ENCODE measurements at regions of chr9 and their contacts with region 1.

Region 1: DNA sequence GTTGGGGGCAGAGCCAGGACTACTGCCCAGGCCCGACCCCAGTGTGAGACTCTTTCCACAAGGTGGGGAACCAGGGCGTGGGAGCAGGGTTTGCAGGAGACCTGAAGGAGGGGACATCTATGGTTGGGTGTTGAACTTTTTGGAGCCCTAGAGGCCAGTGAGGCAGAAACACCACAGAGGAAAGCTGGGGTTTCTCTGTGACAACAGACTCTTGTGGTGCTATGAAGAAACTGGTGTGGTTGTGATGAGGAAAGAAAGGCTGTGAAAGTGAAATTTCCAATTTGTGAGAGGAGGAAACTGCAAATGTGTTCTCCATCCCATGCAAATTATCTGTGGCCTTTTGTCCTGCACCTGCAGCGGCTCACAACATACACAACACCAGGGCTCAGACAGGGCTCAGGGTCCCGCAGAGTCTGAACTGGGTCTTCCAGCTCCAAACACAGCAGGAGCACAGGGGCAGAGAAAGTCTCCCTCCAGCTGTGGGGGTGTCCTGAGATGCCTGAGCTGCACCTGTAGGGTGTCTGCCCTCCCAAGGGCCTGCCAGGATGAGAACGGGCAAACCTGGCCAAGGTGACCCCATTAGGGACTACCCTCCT is 51.4 kb upstream of the GRHPR start:
- DNase-seq: no peak
- H3K4me3 ChIP-seq: no peak overlapping the region
- H3K27ac ChIP-seq: no peak overlapping the region
- H3K4me1 ChIP-seq: no peaks in the 10 kb centered on the region
- H3K27me3 ChIP-seq: no peaks in the 10 kb centered on the region
- CTCF ChIP-seq: no peak

Region 2: DNA sequence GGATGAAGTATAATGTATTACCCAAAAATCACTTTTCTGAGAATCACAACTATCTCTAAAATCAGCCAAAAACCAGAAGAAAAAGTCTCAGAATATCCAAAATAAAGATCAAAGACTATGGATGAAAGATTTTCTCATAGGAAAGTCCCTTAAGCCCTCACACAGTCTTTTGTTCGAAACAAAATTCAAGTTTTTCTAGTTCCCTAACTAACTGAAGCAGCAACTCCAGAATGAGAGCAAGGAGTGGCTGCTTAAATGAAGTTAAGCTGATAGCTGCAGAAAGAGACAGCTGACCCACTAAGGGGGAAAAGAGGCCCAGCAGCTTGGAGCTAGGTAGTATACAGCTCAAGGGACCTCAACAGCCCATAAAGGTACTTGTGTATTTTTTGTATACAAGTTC is 85.8 kb after region 1 on chr9:
- CTCF ChIA-PET with region 1: interaction called, 11 read pairs
- POLR2A ChIA-PET with region 1: no interaction called
- intact Hi-C with region 1: no loop called
- DNase-seq: no peak
- H3K4me3 ChIP-seq: no peak overlapping the region
- H3K27ac ChIP-seq: no peak overlapping the region
- H3K4me1 ChIP-seq: peaks cover 16% of the 10 kb centered on the region
- H3K27me3 ChIP-seq: no peaks in the 10 kb centered on the region
- CTCF ChIP-seq: no peak

Measured in PC-9 (cell line).